ENCODE measurements at regions of chr3 and their contacts with region 1.

Region 1: GRCh38 chr3:125231895-125232294 is 19.3 kb upstream of the SLC12A8 start:
- DNase-seq: no peak
- H3K4me3 Mint-ChIP-seq: no peak overlapping the region
- H3K27ac Mint-ChIP-seq: peak overlapping the region; percentile 60
- H3K4me1 Mint-ChIP-seq: peaks cover 18% of the 10 kb centered on the region
- H3K27me3 Mint-ChIP-seq: no peaks in the 10 kb centered on the region

Region 2: DNA sequence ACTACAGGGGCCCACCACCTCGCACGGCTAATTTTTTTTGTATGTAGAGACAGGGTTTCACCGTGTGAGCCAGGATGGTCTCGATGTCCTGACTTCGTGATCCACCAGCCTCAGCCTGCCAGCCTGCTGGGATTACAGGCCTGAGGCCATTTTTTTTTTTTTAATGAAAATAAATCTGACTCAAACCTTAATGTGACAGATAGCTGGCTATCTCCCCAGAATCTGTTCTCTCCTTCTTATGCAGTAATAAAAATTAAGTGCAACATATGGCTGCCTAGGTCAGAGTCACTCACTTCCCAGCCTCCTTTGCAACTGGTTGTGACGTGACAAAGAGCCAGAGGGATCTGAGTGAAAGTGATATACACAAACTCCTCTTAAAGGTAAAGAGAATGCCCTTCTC is 90.3 kb after region 1 on chr3:
- intact Hi-C with region 1: no loop called
- DNase-seq: no peak
- H3K4me3 Mint-ChIP-seq: no peak overlapping the region
- H3K27ac Mint-ChIP-seq: no peak overlapping the region
- H3K4me1 Mint-ChIP-seq: peaks cover 6% of the 10 kb centered on the region
- H3K27me3 Mint-ChIP-seq: no peaks in the 10 kb centered on the region

Region 3: GRCh38 chr3:125381743-125382142 is 149.8 kb after region 1 on chr3:
- intact Hi-C with region 1: loop called (anchors 5 kb)
- DNase-seq: peak; percentile 23
- H3K4me3 Mint-ChIP-seq: no peak overlapping the region
- H3K27ac Mint-ChIP-seq: peak overlapping the region; percentile 42
- H3K4me1 Mint-ChIP-seq: peaks cover 16% of the 10 kb centered on the region
- H3K27me3 Mint-ChIP-seq: peaks cover 12% of the 10 kb centered on the region